Heart left ventricle (tissue), 16 donors: ENCODE measurements at regions of chr15 and their contacts with region 1.

Region 1: DNA sequence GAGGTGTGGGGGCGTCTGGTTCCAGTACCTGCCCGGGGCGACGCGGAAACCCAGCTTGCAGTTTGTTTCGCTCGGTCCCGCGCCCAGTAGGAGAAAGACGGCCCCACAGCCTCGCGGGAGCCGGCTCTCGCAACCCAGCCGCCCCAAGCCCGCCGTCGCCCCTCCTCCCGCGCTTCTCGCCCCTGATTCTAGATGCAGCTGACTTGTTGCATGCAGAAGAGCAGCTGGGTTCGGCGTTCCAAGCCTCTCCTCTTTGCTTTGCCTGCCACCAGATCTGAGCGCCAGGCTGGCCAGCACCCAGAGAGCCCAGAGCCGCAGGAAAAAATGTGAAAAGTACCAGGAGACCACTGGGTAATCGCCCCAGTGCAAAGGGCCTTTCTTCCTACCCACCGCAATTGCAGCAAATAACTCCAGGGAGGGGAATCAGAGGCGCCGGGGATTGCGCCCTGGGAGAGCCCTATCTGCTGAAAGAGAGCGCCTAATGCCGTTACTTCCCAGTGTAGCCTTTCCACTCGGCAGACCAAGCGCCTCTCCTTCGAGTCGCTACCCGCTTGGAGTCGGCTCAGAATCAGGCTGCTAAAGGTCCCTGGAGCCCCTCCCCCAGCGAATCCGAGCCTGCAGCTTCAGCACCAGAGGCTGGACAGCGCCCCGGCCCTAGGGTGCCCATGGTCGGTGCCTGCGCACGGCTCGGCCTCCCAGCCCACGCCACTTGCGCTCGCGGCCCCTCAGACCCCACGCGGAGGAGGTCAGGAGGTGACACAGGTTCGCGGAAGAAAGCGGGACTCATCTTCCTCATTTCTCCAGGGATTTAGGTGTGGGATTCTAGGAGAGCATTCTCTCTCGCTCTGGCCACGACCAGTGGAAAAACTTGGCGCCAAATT is 15.7 kb upstream of the AEN start:
- DNase-seq: peak in 4 of 5 donors; percentile 48 to 74 (median 63)
- ATAC-seq: peak; percentile 64 to 92 (median 88)
- H3K4me3 ChIP-seq: peak overlapping the region in 4 of 12 donors; percentile 3 to 24 (median 14)
- H3K27ac ChIP-seq: no peak overlapping the region
- H3K4me1 ChIP-seq: peaks cover 0 to 21% (median 7%) of the 10 kb centered on the region in 12 donors
- H3K27me3 ChIP-seq: peaks cover 20 to 64% (median 40%) of the 10 kb centered on the region in 9 donors
- CTCF ChIP-seq: no peak
- POLR2A ChIP-seq: no peak

Region 2: GRCh38 chr15:88674661-88675060 is 69.2 kb after region 1 on chr15:
- intact Hi-C with region 1: loop called in 1 of 10 experiments (anchors 10 kb)
- DNase-seq: no peak
- ATAC-seq: no peak
- H3K4me3 ChIP-seq: no peak overlapping the region
- H3K27ac ChIP-seq: no peak overlapping the region
- H3K4me1 ChIP-seq: no peaks in the 10 kb centered on the region
- H3K27me3 ChIP-seq: peaks cover 0 to 12% (median 0%) of the 10 kb centered on the region in 9 donors
- CTCF ChIP-seq: no peak
- POLR2A ChIP-seq: no peak